ENCODE measurements at regions of chr7 and their contacts with region 1.

Region 1: GRCh38 chr7:21642422-21642821 is 99.6 kb downstream of the DNAH11 start:
- DNase-seq: no peak
- H3K4me3 Mint-ChIP-seq: no peak overlapping the region
- H3K27ac Mint-ChIP-seq: no peak overlapping the region
- H3K4me1 Mint-ChIP-seq: no peaks in the 10 kb centered on the region
- H3K27me3 Mint-ChIP-seq: no peaks in the 10 kb centered on the region
- CTCF ChIP-seq: no peak

Region 2: GRCh38 chr7:21580073-21580521 is 62.3 kb before region 1 on chr7:
- CTCF ChIA-PET with region 1: no interaction called
- intact Hi-C with region 1: loop called (anchors 10 kb)
- DNase-seq: no peak
- H3K4me3 Mint-ChIP-seq: no peak overlapping the region
- H3K27ac Mint-ChIP-seq: peak overlapping the region; percentile 3
- H3K4me1 Mint-ChIP-seq: peaks cover 15% of the 10 kb centered on the region
- H3K27me3 Mint-ChIP-seq: no peaks in the 10 kb centered on the region
- CTCF ChIP-seq: no peak

Region 3: GRCh38 chr7:21616091-21616490 is 26.3 kb before region 1 on chr7:
- CTCF ChIA-PET with region 1: no interaction called
- intact Hi-C with region 1: no loop called
- DNase-seq: no peak
- H3K4me3 Mint-ChIP-seq: no peak overlapping the region
- H3K27ac Mint-ChIP-seq: peak overlapping the region; percentile 98
- H3K4me1 Mint-ChIP-seq: peaks cover 43% of the 10 kb centered on the region
- H3K27me3 Mint-ChIP-seq: no peaks in the 10 kb centered on the region
- CTCF ChIP-seq: no peak

Measured in Calu3 (cell line).